Astrocyte of the cerebellum (primary cell): ENCODE measurements at regions of chr4 and their contacts with region 1.

Region 1: GRCh38 chr4:87848622-87849351 is 16.0 kb downstream of the MEPE start:
- DNase-seq: peak; percentile 44
- H3K4me3 ChIP-seq: peak overlapping the region; percentile 13
- CTCF ChIP-seq: peak; percentile 61

Region 2: GRCh38 chr4:87543835-87544461 is 304.8 kb before region 1 on chr4:
- in situ Hi-C with region 1: loop called (anchors 25 kb)
- DNase-seq: peak; percentile 55
- H3K4me3 ChIP-seq: no peak overlapping the region
- CTCF ChIP-seq: peak; percentile 72

Region 3: GRCh38 chr4:87911252-87911774 is 62.5 kb after region 1 on chr4:
- in situ Hi-C with region 1: no loop called
- DNase-seq: no peak
- H3K4me3 ChIP-seq: no peak overlapping the region
- CTCF ChIP-seq: no peak

Region 4: GRCh38 chr4:87973283-87974169 is 124.7 kb after region 1 on chr4:
- in situ Hi-C with region 1: loop called (anchors 25 kb)
- DNase-seq: peak; percentile 55
- H3K4me3 ChIP-seq: peak overlapping the region; percentile 20
- CTCF ChIP-seq: peak; percentile 80